Caco-2 (cell line): ENCODE measurements at regions of chr4 and their contacts with region 1.

Region 1: DNA sequence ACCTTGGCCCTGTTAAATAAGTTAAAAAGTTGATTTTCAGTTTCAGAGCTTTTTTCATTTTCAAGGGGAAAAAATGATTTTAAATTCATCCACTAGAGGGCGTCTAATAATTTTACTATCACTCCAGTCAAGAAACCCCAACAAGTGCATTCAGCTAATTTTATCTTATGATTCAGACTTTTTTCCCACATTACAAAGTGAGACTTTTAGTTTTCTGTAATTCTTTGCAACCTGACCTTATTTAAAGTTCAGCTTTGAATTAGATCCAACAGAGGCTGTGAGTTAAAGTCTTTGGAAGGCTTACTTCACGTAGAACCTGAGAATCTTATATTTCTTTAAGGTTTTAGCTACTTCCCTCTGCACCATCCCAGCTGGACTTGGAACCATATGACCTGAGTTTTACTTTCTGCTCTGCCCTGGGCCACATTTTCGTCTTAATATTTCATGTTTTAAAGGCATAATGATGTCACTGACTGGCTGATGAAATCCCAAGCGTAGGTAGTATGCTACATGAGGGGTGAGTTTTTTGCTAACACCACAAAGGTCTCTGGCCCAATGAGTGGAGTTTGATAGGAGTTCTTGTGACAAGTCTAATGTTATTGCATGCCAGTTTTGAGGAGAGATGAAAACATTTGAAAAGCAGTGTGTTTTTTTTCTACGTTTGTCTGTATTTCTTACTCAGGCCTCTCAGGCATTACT is 7.2 kb downstream of the GNRHR start:
- DNase-seq: peak in 1 of 2 experiments; percentile 8
- H3K4me3 ChIP-seq: no peak overlapping the region
- H3K4me3 Mint-ChIP-seq: no peak overlapping the region
- H3K27ac Mint-ChIP-seq: no peak overlapping the region
- H3K4me1 ChIP-seq: no peaks in the 10 kb centered on the region
- H3K4me1 Mint-ChIP-seq: no peaks in the 10 kb centered on the region
- H3K27me3 ChIP-seq: no peaks in the 10 kb centered on the region
- H3K27me3 Mint-ChIP-seq: no peaks in the 10 kb centered on the region
- CTCF ChIP-seq: peak in 1 of 2 experiments; percentile 52

Region 2: GRCh38 chr4:67674096-67674495 is 72.8 kb before region 1 on chr4:
- CTCF ChIA-PET with region 1: no interaction called
- POLR2A ChIA-PET with region 1: no interaction called
- intact Hi-C with region 1: loop called (anchors 2 kb)
- DNase-seq: peak in 1 of 2 experiments; percentile 41
- H3K4me3 ChIP-seq: no peak overlapping the region
- H3K4me3 Mint-ChIP-seq: no peak overlapping the region
- H3K27ac Mint-ChIP-seq: no peak overlapping the region
- H3K4me1 ChIP-seq: no peaks in the 10 kb centered on the region
- H3K4me1 Mint-ChIP-seq: no peaks in the 10 kb centered on the region
- H3K27me3 ChIP-seq: no peaks in the 10 kb centered on the region
- H3K27me3 Mint-ChIP-seq: no peaks in the 10 kb centered on the region
- CTCF ChIP-seq: no peak

Region 3: DNA sequence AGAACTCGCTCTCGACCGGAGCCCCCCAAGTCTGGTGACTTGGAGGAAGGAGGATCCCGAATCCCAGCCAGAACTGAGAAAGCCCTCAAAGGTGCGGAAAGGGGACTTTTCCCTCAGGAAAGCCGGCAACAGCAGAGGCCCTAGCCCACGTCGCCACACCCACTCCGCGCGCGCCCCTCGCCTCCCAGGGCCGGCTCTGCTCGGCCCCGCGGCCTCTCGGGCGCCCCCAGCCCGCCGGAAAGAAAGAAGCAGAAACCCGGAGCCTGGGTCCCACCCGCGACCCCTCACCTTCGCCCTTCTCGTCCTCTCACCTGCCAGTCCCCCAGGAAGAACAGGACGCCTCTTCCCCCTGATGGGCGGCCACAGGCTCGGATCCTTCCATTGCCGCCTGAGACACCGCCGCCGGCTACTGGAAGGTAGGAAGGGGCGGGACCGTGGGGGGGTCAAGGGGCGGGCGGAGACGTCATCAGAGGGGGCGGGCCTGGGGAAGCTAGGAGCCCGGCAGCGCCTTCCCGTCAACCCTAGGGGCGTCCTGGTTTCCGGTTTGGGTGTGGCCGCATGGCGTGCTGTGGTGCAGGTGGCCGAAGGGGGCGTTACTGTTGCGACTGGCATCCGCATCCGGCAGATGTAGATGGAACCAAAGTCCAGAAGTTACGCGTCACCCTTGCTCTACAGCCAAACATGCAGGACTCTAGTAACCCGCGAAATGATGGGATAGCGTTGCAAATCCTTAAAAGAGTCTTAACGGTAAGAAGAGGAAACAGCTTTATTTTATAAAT is 46.0 kb before region 1 on chr4 and contains the start of gene UBA6:
- CTCF ChIA-PET with region 1: no interaction called
- POLR2A ChIA-PET with region 1: interaction called, 3 read pairs
- intact Hi-C with region 1: loop called (anchors 5 kb)
- DNase-seq: peak; percentile 97 to 98
- H3K4me3 ChIP-seq: peak within 1 kb of the TSS; percentile 60
- H3K4me3 Mint-ChIP-seq: peak within 1 kb of the TSS; percentile 90
- H3K27ac Mint-ChIP-seq: peak within 1 kb of the TSS; percentile 94
- H3K4me1 ChIP-seq: 0 out of 2 replicates have a peak, but pooled peaks cover 4% of the 10 kb centered on the region
- H3K4me1 Mint-ChIP-seq: peaks cover 12% of the 10 kb centered on the region
- H3K27me3 ChIP-seq: no peaks in the 10 kb centered on the region
- H3K27me3 Mint-ChIP-seq: no peaks in the 10 kb centered on the region
- CTCF ChIP-seq: peak in 1 of 2 experiments; percentile 27
- total RNA-seq, gene UBA6: 74.6 and 77.7 TPM in 2 replicates

Region 4: DNA sequence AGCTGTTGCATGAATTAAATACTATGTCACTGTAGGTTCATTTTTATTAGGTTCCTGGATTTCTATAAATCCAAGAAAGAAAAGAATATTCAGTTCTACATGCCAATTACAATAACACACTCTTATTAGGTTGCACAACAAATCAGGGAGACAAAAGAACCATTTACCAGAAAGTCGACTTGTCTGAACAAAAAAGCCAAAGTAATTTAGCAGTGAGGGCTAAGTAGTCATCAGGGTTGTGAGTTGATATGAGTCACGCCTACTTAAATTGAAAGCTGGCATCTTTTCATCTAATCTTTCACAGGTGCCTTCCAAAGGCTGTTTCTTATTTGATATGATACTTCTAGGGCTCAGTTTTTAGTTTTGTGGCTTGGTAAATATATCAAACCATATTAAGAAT is 32.7 kb after region 1 on chr4:
- CTCF ChIA-PET with region 1: no interaction called
- POLR2A ChIA-PET with region 1: no interaction called
- intact Hi-C with region 1: no loop called
- DNase-seq: no peak
- H3K4me3 ChIP-seq: no peak overlapping the region
- H3K4me3 Mint-ChIP-seq: no peak overlapping the region
- H3K27ac Mint-ChIP-seq: no peak overlapping the region
- H3K4me1 ChIP-seq: no peaks in the 10 kb centered on the region
- H3K4me1 Mint-ChIP-seq: no peaks in the 10 kb centered on the region
- H3K27me3 ChIP-seq: no peaks in the 10 kb centered on the region
- H3K27me3 Mint-ChIP-seq: no peaks in the 10 kb centered on the region
- CTCF ChIP-seq: no peak

Region 5: DNA sequence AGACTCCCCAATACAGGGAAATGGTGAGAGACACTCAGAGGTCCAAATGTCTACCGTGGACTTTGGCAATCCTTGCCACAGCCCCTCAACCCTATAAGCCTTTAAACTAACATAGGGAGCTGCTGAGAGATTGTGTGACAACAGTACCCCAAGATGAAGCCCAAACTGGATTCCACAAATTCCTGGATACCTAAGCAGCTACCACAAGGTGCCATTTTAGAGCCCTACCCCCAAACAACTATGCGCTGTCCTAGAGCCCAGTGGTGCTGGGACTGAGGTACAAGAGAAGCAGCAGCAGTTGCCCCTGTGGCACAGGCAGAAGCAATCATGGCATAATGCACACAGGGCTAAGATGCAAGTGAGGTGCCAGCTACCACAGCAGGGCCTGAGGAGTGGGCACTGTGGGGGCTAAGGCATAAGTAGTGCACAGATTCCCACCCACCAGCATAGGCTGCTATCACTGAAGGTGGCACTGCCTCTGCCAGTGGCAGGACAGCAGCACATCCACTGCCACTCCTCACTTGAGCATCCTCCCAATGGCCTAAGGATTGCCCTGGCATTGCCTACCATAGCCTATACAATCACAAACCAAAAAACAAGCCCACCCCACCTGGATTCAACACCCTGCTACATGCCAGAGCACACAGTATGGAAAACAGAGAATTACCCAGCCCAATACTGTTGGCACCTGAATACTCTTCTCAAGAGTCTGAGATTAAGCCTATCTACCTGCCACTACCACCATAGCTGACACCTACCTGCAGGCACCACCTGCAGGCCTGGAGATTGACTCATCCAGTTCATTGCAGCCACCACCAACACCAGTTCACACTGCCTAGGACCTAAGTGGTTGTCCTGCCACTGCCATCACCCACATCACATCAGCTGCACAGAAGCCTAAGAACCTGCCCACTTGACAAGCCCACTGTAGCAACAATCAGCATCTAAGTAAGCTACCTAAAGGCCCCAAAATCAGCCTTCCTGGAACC is 385.7 kb after region 1 on chr4:
- CTCF ChIA-PET with region 1: no interaction called
- POLR2A ChIA-PET with region 1: no interaction called
- intact Hi-C with region 1: no loop called
- DNase-seq: no peak
- H3K4me3 ChIP-seq: no peak overlapping the region
- H3K4me3 Mint-ChIP-seq: no peak overlapping the region
- H3K27ac Mint-ChIP-seq: no peak overlapping the region
- H3K4me1 ChIP-seq: 0 out of 2 replicates have a peak, but pooled peaks cover 5% of the 10 kb centered on the region
- H3K4me1 Mint-ChIP-seq: peaks cover 10% of the 10 kb centered on the region
- H3K27me3 ChIP-seq: no peaks in the 10 kb centered on the region
- H3K27me3 Mint-ChIP-seq: no peaks in the 10 kb centered on the region
- CTCF ChIP-seq: no peak